ENCODE measurements at regions of chr1 and their contacts with region 1.

Region 1: GRCh38 chr1:36149237-36149972 is at the start of gene TRAPPC3:
- DNase-seq: peak; percentile 99
- H3K4me3 Mint-ChIP-seq: peak within 1 kb of the TSS; percentile 92
- H3K27ac Mint-ChIP-seq: peak within 1 kb of the TSS; percentile 99
- H3K4me1 Mint-ChIP-seq: peaks cover 68% of the 10 kb centered on the region
- H3K27me3 Mint-ChIP-seq: no peaks in the 10 kb centered on the region
- total RNA-seq, gene TRAPPC3: 74.2 and 74.4 TPM in 2 replicates

Region 2: GRCh38 chr1:35882945-35883634 is 266.3 kb before region 1 on chr1 and contains the start of gene AGO1:
- intact Hi-C with region 1: loop called (anchors 5 kb)
- DNase-seq: peak; percentile 97
- H3K4me3 Mint-ChIP-seq: peak within 1 kb of the TSS; percentile 95
- H3K27ac Mint-ChIP-seq: peak within 1 kb of the TSS; percentile 64
- H3K4me1 Mint-ChIP-seq: peaks cover 48% of the 10 kb centered on the region
- H3K27me3 Mint-ChIP-seq: peaks cover 6% of the 10 kb centered on the region
- total RNA-seq, gene AGO1: 39.0 and 39.5 TPM in 2 replicates

Region 3: GRCh38 chr1:36099681-36100341 is 49.6 kb before region 1 on chr1:
- intact Hi-C with region 1: loop called (anchors 1 kb)
- DNase-seq: peak; percentile 65
- H3K4me3 Mint-ChIP-seq: no peak overlapping the region
- H3K27ac Mint-ChIP-seq: no peak overlapping the region
- H3K4me1 Mint-ChIP-seq: no peaks in the 10 kb centered on the region
- H3K27me3 Mint-ChIP-seq: no peaks in the 10 kb centered on the region

Region 4: DNA sequence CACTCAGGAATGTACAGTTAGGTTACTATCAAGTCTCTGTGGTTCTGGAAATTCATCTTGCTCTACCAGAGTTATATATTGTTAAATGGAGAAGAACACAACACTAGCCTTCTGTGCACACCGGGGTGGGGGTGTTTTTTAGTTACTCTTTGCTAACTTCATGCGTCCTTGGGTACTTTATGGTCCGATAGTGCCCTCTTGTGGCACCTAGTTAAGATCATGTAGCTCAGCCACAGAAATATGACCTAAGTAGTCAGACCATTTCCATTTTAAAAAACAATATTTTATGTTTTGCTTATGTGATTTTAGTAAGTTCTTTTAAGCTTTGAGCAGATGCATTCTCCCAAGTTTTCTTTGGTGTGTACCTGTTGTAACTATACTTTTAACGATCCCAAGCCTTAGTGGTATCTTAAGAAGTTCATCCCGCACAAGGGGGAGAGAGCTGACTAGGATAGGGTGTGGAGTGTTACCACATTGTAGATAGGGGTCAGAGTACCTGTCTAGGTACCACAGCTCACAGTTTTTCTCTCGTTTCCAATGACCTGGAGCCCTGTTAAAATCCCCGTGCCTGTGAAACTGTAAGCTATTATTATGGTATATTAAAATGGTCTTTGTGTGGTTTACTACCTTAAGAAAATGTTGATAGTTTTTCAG is 136.2 kb after region 1 on chr1:
- intact Hi-C with region 1: loop called (anchors 1 kb)
- DNase-seq: peak; percentile 53
- H3K4me3 Mint-ChIP-seq: no peak overlapping the region
- H3K27ac Mint-ChIP-seq: peak overlapping the region; percentile 63
- H3K4me1 Mint-ChIP-seq: peaks cover 42% of the 10 kb centered on the region
- H3K27me3 Mint-ChIP-seq: no peaks in the 10 kb centered on the region

Region 5: DNA sequence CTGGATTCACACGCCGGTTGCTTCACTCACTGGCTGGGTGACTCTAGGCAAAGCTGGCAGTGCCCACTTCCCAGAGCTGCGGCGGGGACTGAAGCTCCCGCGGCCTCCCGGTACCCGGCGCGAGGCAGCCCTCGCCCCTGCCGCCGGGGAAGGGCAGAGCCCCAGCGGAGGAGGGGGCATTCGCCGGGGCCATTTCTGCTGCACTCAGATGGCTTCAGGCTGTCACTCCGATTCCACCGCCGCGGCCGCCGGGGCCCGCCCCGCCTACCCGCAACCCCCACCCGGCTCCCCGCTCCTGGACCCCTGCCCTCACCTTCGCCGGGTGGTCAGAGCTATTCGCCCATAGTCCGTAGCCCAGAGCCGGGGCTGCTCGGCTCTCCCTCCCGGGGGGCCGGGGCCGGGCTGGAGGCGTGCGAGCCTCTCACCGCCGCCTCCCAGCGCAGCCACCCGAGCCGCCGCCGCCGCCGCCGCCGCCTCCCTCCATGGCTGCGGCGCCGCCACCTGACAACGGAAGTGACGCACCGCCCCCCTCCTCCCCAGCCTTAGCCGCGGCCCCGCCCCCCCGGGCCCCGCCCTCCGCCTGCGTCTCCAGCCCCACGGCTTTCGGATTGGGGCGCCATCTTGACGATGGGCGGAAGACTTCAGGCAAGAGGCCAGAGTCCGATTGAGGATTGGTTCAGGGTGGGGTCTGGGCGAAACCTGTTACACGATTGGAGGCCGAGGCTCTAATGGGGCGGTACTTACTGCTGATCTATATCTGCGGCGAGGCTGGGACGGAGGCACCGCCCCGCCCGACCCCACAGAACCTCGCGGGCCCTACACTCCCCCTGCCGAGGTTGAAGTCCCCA is 236.2 kb after region 1 on chr1 and contains the start of gene STK40:
- intact Hi-C with region 1: loop called (anchors 1 kb)
- DNase-seq: peak; percentile 95
- H3K4me3 Mint-ChIP-seq: peak within 1 kb of the TSS; percentile 96
- H3K27ac Mint-ChIP-seq: peak within 1 kb of the TSS; percentile 97
- H3K4me1 Mint-ChIP-seq: peaks cover 54% of the 10 kb centered on the region
- H3K27me3 Mint-ChIP-seq: no peaks in the 10 kb centered on the region
- total RNA-seq, gene STK40: 46.5 and 48.7 TPM in 2 replicates

Region 6: DNA sequence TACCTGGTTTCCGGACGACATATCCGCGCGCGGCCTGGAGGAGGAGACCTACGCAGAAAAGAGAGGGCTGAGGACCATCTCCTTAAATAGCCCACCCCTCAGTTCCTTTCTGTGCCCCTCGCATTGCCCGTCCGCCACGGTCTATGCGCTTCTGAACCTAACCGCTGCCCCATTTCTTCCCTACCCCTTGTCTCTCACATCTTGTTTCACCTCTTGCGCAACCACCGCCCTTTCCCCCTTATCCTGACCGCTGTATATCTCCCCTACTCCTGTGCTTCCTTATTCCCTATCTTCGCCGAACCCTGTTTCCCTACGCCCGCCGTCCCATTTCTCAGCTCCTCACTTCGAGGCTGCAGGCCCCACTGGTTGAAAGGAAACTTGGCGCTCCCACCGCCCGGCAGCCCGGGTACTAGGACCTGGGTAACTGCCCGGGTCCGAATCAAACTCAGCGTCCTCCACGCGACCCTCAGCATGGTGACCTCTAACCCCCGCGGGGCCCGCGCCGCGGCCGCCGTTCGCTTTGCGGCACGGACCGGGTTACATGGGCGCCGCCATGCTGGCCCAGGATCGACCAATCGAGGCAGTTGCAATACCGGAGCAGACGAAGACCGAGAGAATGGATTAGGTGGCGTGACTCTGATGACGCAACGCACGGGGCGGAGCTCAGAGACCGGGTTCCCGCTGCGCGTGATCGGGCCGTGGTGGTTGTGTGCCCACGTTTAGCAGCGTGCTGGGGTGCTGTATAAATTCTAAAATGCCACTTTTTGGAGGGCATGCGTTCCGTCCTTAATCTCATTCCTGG is 314.6 kb after region 1 on chr1 and contains the start of gene MRPS15:
- intact Hi-C with region 1: loop called (anchors 1 kb)
- DNase-seq: peak; percentile 92
- H3K4me3 Mint-ChIP-seq: peak within 1 kb of the TSS; percentile 100
- H3K27ac Mint-ChIP-seq: peak within 1 kb of the TSS; percentile 97
- H3K4me1 Mint-ChIP-seq: peaks cover 63% of the 10 kb centered on the region
- H3K27me3 Mint-ChIP-seq: no peaks in the 10 kb centered on the region
- total RNA-seq, gene MRPS15: 118 and 121 TPM in 2 replicates

Measured in activated T-helper 1 cell treated with anti-CD3 and anti-CD28 coated beads, Interleukin-12 subunit alpha, Interleukin-12 subunit beta, Interleukin-2, Interleukin-4 antibody, amounts not matched to agents 30 ng/mL and 10 ng/mL and 1 ng/mL, durations not matched to agents 14 hours and 24 hours and 36 hours (primary cell).